Activated CD8-positive, alpha-beta T cell treated with anti-CD3 and anti-CD28 coated beads, Interleukin-2, amount 10 ng/mL, durations not matched to agents 7 days and 5 days (primary cell): ENCODE measurements at regions of chr14 and their contacts with region 1.

Region 1: GRCh38 chr14:20662968-20663732 is 21.2 kb upstream of the RNASE4 start:
- DNase-seq: peak; percentile 88
- ATAC-seq: peak; percentile 86
- H3K4me3 Mint-ChIP-seq: peak overlapping the region; percentile 74
- H3K27ac Mint-ChIP-seq: no peak overlapping the region
- H3K4me1 Mint-ChIP-seq: peaks cover 49% of the 10 kb centered on the region
- H3K27me3 Mint-ChIP-seq: peaks cover 16% of the 10 kb centered on the region

Region 2: DNA sequence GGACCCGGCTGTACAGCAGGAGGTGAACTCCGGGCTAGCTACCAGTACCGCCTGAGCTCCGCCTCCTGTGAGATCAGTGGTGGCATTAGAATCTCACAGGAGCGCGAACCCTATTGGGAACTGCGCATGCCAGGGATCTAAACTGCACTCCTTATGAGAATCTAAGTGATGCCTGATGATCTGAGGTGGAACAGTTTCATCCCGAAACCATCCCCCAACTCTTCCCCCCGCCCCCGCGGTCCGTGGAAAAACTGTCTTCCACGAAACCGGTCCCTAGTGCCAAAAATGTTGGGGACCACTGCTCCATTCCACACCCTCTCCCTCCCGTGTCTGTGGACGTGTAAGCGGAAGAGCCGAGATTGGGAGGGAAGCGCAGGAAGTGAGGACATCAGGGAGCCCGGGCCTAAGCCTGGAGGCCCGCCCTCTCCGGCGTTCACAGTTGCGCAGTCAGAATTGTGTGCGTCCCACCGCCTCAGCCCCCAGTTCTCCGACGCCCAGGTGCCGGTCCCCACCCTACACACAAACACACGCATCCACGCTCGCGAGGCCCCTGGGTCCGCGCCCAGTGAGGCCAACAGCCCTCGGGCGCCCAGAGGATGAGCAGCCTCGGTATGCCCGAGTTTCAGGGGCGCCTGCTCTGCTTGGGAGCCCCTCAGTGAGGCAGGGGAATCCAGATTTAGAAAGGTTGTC is 19.4 kb after region 1 on chr14:
- CTCF ChIA-PET with region 1: interaction called, 189 read pairs
- POLR2A ChIA-PET with region 1: interaction called, 21 read pairs
- DNase-seq: peak; percentile 83
- ATAC-seq: peak; percentile 60
- H3K4me3 Mint-ChIP-seq: no peak overlapping the region
- H3K27ac Mint-ChIP-seq: no peak overlapping the region
- H3K4me1 Mint-ChIP-seq: peaks cover 14% of the 10 kb centered on the region
- H3K27me3 Mint-ChIP-seq: no peaks in the 10 kb centered on the region

Region 3: DNA sequence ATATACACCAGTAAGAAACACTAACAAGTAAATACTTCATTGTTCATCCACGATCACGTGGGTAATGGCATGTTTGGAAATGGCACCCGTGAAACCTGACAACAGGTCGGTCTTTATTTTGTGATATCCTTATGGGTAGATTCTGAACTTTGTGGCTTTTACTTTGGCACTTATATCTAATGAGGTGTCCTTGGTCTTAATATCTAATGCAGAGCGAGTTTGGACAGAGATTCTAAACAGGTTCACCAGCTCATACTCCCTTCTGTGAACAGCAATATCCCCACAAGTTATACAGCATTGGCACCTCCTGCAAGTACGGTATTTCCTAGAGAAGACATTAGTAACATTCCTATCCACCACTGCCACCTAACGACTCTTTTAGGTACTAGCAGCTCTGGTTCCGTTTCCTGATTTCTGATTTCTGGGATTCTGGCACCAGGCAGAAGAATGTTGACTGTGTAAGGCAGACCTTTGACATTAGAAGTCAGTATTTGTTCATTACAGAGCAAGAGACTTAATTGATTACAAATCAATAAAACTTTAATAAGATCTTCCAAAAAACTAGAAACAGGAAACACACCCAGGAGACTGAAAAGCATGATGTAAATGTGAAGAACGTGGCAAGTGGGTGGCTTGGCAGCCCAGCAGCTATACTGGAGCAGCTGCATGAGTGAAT is 27.8 kb after region 1 on chr14:
- CTCF ChIA-PET with region 1: interaction called, 189 read pairs
- POLR2A ChIA-PET with region 1: interaction called, 14 read pairs
- DNase-seq: peak; percentile 61
- ATAC-seq: peak; percentile 81
- H3K4me3 Mint-ChIP-seq: no peak overlapping the region
- H3K27ac Mint-ChIP-seq: no peak overlapping the region
- H3K4me1 Mint-ChIP-seq: peaks cover 11% of the 10 kb centered on the region
- H3K27me3 Mint-ChIP-seq: no peaks in the 10 kb centered on the region